H1 (cell line): ENCODE measurements at regions of chr6 and their contacts with region 1.

Region 1: GRCh38 chr6:95280690-95281273 is 296.6 kb upstream of the MANEA start:
- DNase-seq: no peak
- H3K4me3 ChIP-seq: no peak overlapping the region
- H3K27ac ChIP-seq: no peak overlapping the region
- H3K4me1 ChIP-seq: no peaks in the 10 kb centered on the region
- H3K27me3 ChIP-seq: no peaks in the 10 kb centered on the region
- CTCF ChIP-seq: peak in 2 of 3 experiments; percentile 30 to 42; a peak in 3 of 4 replicates
- EP300 ChIP-seq: no peak
- POLR2A ChIP-seq: no peak
- RAD21 ChIP-seq: peak; percentile 65 to 71

Region 2: GRCh38 chr6:95203153-95203754 is 77.5 kb before region 1 on chr6:
- CTCF ChIA-PET with region 1: interaction called, 39 read pairs
- POLR2A ChIA-PET with region 1: no interaction called
- DNase-seq: peak in 1 of 2 experiments; percentile 3
- H3K4me3 ChIP-seq: no peak overlapping the region
- H3K27ac ChIP-seq: no peak overlapping the region
- H3K4me1 ChIP-seq: no peaks in the 10 kb centered on the region
- H3K27me3 ChIP-seq: no peaks in the 10 kb centered on the region
- CTCF ChIP-seq: peak in 2 of 3 experiments; percentile 48 to 68; a peak in 2 of 4 replicates
- EP300 ChIP-seq: no peak
- POLR2A ChIP-seq: no peak
- RAD21 ChIP-seq: peak; percentile 60 to 62

Region 3: DNA sequence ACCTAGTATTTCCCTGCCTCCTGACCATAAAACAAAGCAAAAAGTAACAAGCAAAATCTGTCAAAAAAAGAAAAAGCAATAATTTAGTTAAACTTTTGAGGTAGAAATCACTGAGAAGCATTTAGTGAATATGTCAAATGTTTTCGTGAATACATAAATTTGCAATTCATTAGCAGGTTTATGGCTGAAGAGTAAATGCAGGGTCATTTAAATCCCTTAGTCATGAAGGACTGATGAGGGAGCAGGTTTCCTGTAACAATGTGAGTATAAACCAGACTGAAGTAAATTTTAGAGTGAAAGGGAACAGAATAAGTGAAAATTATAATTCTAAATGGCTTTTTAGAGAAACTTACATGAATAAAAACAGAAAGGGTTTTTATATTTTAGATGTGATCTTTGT is 16.9 kb before region 1 on chr6:
- CTCF ChIA-PET with region 1: interaction called, 12 read pairs
- POLR2A ChIA-PET with region 1: no interaction called
- DNase-seq: no peak
- H3K4me3 ChIP-seq: no peak overlapping the region
- H3K27ac ChIP-seq: no peak overlapping the region
- H3K4me1 ChIP-seq: no peaks in the 10 kb centered on the region
- H3K27me3 ChIP-seq: no peaks in the 10 kb centered on the region
- CTCF ChIP-seq: no peak
- EP300 ChIP-seq: no peak
- POLR2A ChIP-seq: no peak
- RAD21 ChIP-seq: no peak